ENCODE measurements at regions of chr5 and their contacts with region 1.

Region 1: DNA sequence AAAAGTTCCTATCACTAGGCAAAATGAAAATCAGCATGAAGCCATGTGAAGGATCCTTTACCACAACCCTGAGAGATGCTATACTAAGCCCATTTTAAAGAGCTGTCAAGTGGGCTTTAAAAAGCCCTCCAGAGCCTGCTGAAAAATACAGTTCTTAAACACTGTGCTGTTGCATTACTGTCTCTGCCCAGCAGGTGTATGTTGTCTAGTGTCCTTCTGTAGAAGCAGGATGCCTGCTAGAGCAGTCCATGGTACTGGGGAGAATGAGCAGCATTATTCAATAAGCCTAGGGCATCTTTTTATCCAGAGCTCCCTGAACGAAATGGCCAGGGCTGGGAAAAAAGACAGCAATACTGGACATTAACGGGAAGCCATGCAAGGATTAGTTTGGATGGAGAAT is 126.2 kb upstream of the PLCXD3 start:
- DNase-seq: no peak
- H3K4me3 ChIP-seq: no peak overlapping the region
- CTCF ChIP-seq: peak; percentile 10

Region 2: GRCh38 chr5:41270423-41271251 is 366.0 kb before region 1 on chr5:
- CTCF ChIA-PET with region 1: interaction called, 40 read pairs
- POLR2A ChIA-PET with region 1: no interaction called
- DNase-seq: no peak
- H3K4me3 ChIP-seq: no peak overlapping the region
- CTCF ChIP-seq: peak; percentile 73